ENCODE measurements at regions of chr22 and their contacts with region 1.

Region 1: DNA sequence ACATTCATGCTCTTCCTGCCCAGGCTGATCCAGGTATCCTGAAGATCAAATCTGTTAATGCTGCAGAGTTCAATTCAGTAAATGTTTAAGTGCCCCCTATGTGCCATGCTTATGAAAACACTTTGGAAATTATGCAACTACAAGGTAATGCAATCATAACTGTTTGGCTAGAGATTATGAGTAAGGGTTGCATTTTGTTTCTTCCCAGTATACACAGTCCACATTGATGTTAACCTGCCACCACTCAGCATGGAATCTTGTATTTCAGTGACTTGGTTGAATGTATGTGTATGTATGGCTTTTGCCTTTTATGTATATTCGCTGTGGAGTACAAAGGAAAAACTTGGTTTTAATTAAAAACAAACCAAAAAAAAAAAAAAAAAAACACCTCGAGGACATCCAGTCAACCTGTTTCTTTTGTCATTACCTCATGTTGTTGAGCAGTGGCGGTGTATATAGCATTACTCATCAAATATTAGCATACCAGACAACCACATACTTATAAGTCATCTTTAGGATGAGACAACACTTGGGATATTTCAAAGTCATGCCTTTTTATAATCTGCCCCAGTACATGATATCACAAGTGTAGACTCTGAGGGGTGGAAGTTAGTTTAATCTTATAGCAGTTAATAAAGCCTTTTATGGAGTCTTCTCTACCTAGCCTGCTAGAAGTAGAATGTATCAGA is 86.1 kb upstream of the HORMAD2 start:
- DNase-seq: peak; percentile 14
- H3K4me3 ChIP-seq: no peak overlapping the region
- H3K27ac ChIP-seq: peak overlapping the region in 1 of 2 experiments; percentile 78; a peak in 3 of 4 replicates
- H3K4me1 ChIP-seq: peaks cover 5 to 33% of the 10 kb centered on the region in 2 experiments
- H3K27me3 ChIP-seq: no peaks in the 10 kb centered on the region
- CTCF ChIP-seq: no peak; the same call in 1 of the 2 replicates
- EP300 ChIP-seq: 0 out of 4 replicates have a peak, but pooled peaks of 1 of the 2 experiments have one; percentile 62
- RAD21 ChIP-seq: peak; percentile 51

Region 2: DNA sequence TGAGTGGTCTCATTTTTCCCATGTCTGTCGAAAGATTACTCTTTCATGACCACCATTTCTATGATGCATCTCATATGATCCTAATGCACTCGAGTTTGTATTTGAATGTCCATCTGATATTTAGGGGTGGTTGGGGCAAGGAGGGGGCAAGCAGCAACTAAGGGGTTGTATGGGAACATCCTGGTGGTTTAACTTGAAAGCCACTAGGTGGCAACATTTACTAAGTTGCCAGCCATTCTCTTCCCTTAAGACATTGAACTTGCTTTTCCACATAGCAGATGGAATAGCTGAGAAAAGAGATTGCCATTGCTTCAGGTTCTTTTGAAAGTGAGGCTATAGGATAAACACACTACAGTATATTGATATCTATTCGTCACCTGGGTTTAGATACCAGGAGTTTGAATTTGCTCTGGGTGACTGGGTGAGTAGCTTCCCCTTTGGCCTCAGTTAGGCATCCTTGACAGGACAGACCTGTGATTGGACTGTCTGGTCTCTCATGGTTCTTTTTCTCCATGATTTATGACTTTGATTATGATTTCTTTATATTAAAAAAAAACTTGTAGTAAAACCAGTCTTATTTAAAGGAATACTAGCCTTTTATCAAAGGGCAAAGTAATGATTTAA is 358.3 kb before region 1 on chr22:
- CTCF ChIA-PET with region 1: interaction called, 13 read pairs
- POLR2A ChIA-PET with region 1: no interaction called
- DNase-seq: peak; percentile 60
- H3K4me3 ChIP-seq: no peak overlapping the region; a peak in 1 of 4 replicates
- H3K27ac ChIP-seq: no peak overlapping the region
- H3K4me1 ChIP-seq: peaks cover 0 to 19% of the 10 kb centered on the region in 2 experiments; a peak in 2 of 4 replicates
- H3K27me3 ChIP-seq: no peaks in the 10 kb centered on the region
- CTCF ChIP-seq: peak; percentile 79
- EP300 ChIP-seq: no peak
- RAD21 ChIP-seq: peak; percentile 91

Region 3: GRCh38 chr22:29762263-29762662 is 231.9 kb before region 1 on chr22:
- CTCF ChIA-PET with region 1: no interaction called
- POLR2A ChIA-PET with region 1: no interaction called
- DNase-seq: no peak
- H3K4me3 ChIP-seq: no peak overlapping the region
- H3K27ac ChIP-seq: no peak overlapping the region
- H3K4me1 ChIP-seq: peaks cover 0 to 8% of the 10 kb centered on the region in 2 experiments; a peak in 1 of 4 replicates
- H3K27me3 ChIP-seq: no peaks in the 10 kb centered on the region
- CTCF ChIP-seq: no peak
- EP300 ChIP-seq: no peak
- RAD21 ChIP-seq: no peak